Sciatic nerve (tissue), 2 donors: ENCODE measurements at regions of chr12 and their contacts with region 1.

Region 1: DNA sequence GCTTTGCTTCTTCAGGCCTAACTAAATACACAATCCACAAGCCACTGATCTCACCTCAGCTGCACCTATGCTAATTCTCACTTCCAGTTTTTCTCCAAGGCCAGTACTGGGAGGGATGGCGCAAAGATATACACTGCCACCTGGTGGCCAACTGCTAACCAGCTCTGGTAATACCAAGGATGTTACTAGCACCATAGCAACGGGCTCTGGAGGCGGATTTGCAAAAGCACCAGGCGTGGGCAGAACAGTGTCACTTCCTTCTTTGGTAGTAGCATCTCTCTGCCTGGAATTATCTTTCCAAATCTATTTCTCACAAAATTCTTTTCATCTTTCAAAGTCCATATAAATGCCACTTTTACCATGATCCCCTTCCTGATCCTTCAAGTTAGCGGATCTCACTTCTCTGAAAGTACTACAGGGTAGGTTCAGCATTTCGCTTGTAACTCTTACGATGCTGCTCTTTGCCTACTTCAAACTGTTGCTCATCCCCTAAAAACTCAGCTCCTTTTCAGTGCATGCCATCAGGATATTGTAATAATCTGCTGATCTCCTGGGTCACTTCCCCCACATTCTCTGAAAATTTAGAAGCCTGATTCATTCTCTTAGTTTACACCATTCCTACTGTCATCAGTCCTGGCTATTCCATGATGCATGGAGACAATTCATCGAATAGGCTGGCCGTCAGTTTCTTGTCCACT is 37.1 kb upstream of the FOXJ2 start:
- DNase-seq: peak; percentile 87
- ATAC-seq: peak; percentile 99

Region 2: DNA sequence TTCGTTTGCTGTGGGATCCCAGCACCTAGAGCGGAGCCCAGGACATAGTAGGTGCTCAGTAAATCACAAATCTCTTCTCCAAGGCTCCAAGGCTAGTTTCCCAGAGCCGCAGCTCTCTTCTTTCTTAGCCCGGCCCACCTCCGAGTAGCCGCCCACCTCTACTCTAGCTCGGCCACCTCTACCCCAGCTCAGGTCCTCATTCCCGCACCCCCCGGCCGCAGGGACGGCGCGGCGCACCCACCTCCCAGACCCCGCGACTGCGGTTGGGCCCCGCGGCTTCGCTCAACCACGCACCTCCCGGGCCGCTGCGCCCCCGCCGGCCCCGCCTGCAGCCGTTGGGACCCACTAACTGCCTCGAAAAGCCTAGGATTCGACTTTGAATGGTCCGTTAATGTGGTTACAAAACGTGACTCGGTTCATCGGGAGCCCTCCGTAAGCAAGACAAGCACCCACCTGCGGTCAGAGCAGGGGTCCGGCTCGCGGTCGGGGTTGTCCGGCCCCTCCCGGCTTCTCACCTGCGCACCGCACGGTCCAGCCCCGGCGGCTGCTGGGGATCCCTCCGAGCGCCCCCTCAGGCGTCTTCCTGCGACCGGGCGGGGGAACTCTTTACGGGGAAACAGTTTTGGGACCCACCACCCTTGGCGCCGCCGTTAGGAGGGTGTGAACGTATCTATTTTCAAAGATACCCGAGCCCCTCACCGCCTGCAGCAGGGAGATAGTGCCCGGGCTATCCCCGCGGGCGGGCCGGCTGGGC is 122.7 kb before region 1 on chr12 and contains the start of gene SLC2A14:
- intact Hi-C with region 1: loop called (anchors 10 kb)
- DNase-seq: no peak
- ATAC-seq: no peak
- total RNA-seq, gene SLC2A14: 7.5 TPM

Region 3: DNA sequence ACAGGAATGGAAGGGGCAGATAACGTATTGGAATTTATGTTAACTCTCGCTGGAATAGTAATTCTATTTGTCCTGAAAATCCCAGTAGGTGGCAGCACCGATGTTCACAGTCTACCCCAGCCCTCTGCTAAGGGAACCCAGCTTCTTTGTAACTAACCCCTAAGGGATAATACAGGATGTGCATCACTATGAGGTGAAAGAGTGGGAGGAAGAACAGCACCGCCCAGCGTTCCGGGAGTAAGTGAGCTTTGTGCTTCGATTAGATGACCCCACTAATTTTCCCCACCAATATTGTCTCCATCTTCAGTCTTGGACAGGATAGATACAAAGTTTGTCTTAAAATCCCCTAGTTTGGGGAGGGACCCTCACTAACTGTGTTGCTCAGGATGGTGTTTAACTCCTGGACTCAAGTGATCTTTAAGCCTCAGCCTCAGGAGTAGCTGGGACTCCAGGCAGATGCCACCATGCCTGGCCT is 62.1 kb before region 1 on chr12:
- intact Hi-C with region 1: loop called (anchors 10 kb)
- DNase-seq: peak; percentile 79
- ATAC-seq: peak; percentile 89

Region 4: GRCh38 chr12:9732921-9733461 is 1737.6 kb after region 1 on chr12 and contains the start of gene CLECL1:
- intact Hi-C with region 1: no loop called
- DNase-seq: no peak
- ATAC-seq: no peak
- total RNA-seq, gene CLECL1: 1.1 TPM